A673 (cell line): ENCODE measurements at regions of chr2 and their contacts with region 1.

Region 1: DNA sequence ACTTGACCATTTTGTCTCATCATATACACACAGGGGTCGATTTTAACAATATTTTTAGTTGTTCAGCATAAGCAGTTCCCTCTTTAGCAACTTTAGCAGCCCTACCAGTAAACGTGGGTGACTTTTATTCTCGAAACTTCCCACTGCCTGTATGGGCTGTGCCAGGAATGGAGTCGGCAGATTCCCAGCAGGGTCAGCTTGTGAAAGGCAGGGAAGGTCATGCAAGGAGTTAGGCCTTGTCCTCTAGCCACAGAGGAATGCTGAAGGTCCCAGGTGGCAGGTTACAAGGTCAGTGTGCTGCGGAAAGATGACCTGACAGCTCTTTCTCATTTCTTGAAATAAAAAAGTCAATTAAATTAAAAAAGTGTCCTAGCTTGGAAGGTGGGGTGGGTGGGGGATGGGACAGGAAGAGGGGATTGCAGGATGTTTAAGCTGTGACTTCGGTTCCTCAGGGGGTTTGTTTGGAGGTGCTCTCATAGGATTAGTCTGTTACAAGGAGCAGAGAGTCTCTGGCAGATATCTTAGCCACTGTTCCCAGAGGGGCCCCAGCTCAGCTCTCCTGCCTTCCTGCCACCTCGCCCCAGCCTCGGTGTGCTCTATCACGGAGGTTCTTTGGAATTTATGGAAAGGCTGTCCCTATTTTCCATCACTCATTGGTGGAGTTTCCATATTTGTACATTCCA is 21.4 kb downstream of the DRC1 start:
- DNase-seq: no peak
- H3K4me3 ChIP-seq: no peak overlapping the region
- H3K27ac ChIP-seq: no peak overlapping the region
- H3K4me1 ChIP-seq: no peaks in the 10 kb centered on the region
- H3K27me3 ChIP-seq: no peaks in the 10 kb centered on the region
- CTCF ChIP-seq: no peak

Region 2: GRCh38 chr2:26380281-26380680 is 42.8 kb before region 1 on chr2:
- CTCF ChIA-PET with region 1: no interaction called
- POLR2A ChIA-PET with region 1: interaction called, 14 read pairs
- intact Hi-C with region 1: no loop called
- DNase-seq: no peak
- H3K4me3 ChIP-seq: no peak overlapping the region
- H3K27ac ChIP-seq: no peak overlapping the region
- H3K4me1 ChIP-seq: peaks cover 14% of the 10 kb centered on the region
- H3K27me3 ChIP-seq: no peaks in the 10 kb centered on the region
- CTCF ChIP-seq: no peak

Region 3: GRCh38 chr2:27249891-27250651 is 827.0 kb after region 1 on chr2:
- CTCF ChIA-PET with region 1: no interaction called
- POLR2A ChIA-PET with region 1: no interaction called
- intact Hi-C with region 1: no loop called
- DNase-seq: peak; percentile 69
- H3K4me3 ChIP-seq: no peak overlapping the region
- H3K27ac ChIP-seq: no peak overlapping the region
- H3K4me1 ChIP-seq: no peaks in the 10 kb centered on the region
- H3K27me3 ChIP-seq: no peaks in the 10 kb centered on the region
- CTCF ChIP-seq: peak; percentile 91